ENCODE measurements at regions of chr10 and their contacts with region 1.

Region 1: DNA sequence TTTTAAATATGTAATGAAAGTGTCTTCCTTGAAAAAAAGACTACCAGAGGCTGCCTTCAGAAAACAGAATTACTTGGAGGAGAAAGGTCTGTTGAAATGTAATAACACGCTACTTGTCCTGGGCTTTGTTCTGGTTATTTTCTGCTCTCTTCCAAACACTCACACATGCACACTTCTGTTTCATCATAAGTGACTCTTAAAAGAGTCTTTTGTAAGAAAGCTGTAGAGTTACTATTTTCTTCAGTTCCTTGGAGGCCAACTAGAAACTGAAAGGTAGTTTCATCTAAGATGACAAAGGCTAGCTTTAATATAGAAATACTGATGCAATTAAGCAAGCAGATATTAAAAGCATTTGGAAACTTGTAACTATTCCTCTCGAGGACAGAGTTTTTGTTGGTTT is 39.1 kb downstream of the TASOR2 start:
- DNase-seq: no peak
- ATAC-seq: no peak
- H3K4me3 ChIP-seq: no peak overlapping the region
- H3K27ac ChIP-seq: no peak overlapping the region
- H3K4me1 ChIP-seq: no peaks in the 10 kb centered on the region
- H3K27me3 ChIP-seq: no peaks in the 10 kb centered on the region
- CTCF ChIP-seq: no peak

Region 2: DNA sequence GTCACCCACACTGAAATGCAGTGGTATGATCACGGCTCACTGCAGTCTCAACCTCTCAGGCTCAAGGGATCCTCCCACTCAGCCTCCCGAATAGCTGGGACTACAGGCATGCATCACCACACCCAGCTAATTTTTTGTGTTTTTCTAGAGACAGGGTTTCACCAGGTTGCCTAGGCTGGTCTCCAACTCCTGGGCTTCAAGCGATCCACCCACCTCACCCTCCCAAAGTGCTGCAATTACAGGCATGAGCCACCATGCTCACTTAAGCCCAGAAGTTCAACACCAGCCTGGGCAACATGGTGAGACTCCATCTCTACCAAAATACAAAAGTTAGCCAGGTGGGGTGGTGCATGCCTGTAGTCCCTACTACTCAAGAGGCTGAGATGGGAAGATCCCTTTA is 56.0 kb after region 1 on chr10:
- intact Hi-C with region 1: loop called in 1 of 10 experiments (anchors 10 kb)
- DNase-seq: no peak
- ATAC-seq: no peak
- H3K4me3 ChIP-seq: no peak overlapping the region
- H3K27ac ChIP-seq: no peak overlapping the region
- H3K4me1 ChIP-seq: peaks cover 3 to 37% (median 27%) of the 10 kb centered on the region in 9 donors
- H3K27me3 ChIP-seq: no peaks in the 10 kb centered on the region
- CTCF ChIP-seq: no peak